Esophagus muscularis mucosa (tissue), 4 donors: ENCODE measurements at regions of chr1 and their contacts with region 1.

Region 1: GRCh38 chr1:214632091-214632490 is 29.1 kb downstream of the CENPF start:
- DNase-seq: no peak
- H3K4me3 ChIP-seq: no peak overlapping the region
- H3K27ac ChIP-seq: no peak overlapping the region
- H3K4me1 ChIP-seq: no peaks in the 10 kb centered on the region
- H3K27me3 ChIP-seq: no peaks in the 10 kb centered on the region
- CTCF ChIP-seq: no peak
- EP300 ChIP-seq: no peak
- POLR2A ChIP-seq: no peak

Region 2: GRCh38 chr1:214466403-214467077 is 165.6 kb before region 1 on chr1:
- intact Hi-C with region 1: no loop called
- DNase-seq: no peak
- H3K4me3 ChIP-seq: no peak overlapping the region
- H3K27ac ChIP-seq: peak overlapping the region in 1 of 4 donors; percentile 2
- H3K4me1 ChIP-seq: peaks cover 0 to 39% (median 19%) of the 10 kb centered on the region in 4 donors
- H3K27me3 ChIP-seq: no peaks in the 10 kb centered on the region
- CTCF ChIP-seq: no peak
- EP300 ChIP-seq: no peak
- POLR2A ChIP-seq: no peak

Region 3: DNA sequence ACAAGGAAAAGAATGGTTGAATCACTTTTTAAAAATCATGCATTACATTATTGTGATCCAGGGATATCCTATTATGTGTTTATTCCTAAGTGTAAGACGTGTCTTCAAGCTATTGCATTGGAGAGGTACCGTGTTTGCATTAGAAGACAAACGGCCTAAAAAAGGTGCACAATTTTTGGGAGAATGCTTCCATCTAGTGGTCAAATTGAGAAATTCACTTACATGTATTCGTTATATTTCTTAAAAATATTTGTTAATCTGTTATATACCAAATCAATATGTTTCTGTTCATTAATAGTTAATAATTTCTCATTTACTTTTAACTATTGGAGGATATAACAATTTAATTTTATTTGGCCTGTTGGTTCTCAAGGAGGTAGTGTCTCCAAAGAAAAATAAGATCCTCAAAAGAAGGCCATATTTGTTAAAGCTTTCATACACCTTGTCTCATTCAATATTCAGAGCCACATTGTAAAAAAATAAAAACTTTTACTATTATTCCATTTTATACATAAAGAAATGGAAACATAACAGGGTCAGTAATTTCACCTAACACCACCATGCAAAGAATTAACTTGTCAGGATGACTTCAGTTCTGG is 894.6 kb after region 1 on chr1:
- intact Hi-C with region 1: loop called (anchors 5 kb)
- DNase-seq: no peak
- H3K4me3 ChIP-seq: no peak overlapping the region
- H3K27ac ChIP-seq: no peak overlapping the region
- H3K4me1 ChIP-seq: no peaks in the 10 kb centered on the region
- H3K27me3 ChIP-seq: peaks cover 0 to 6% (median 0%) of the 10 kb centered on the region in 4 donors
- CTCF ChIP-seq: peak; percentile 60 to 72 (median 72)
- EP300 ChIP-seq: no peak
- POLR2A ChIP-seq: no peak